PC-3 (cell line): ENCODE measurements at regions of chr5 and their contacts with region 1.

Region 1: GRCh38 chr5:138035605-138036537 is 3.0 kb upstream of the FAM13B start:
- DNase-seq: peak; percentile 80
- ATAC-seq: peak; percentile 59
- H3K4me3 ChIP-seq: no peak overlapping the region
- H3K27ac ChIP-seq: no peak overlapping the region
- H3K4me1 ChIP-seq: peaks cover 8% of the 10 kb centered on the region
- H3K27me3 ChIP-seq: no peaks in the 10 kb centered on the region
- CTCF ChIP-seq: peak; percentile 95

Region 2: GRCh38 chr5:138065102-138065501 is 29.2 kb after region 1 on chr5:
- CTCF ChIA-PET with region 1: interaction called, 13 read pairs
- POLR2A ChIA-PET with region 1: no interaction called
- intact Hi-C with region 1: loop called (anchors 1 kb)
- DNase-seq: peak; percentile 3
- ATAC-seq: no peak
- H3K4me3 ChIP-seq: no peak overlapping the region
- H3K27ac ChIP-seq: no peak overlapping the region
- H3K4me1 ChIP-seq: no peaks in the 10 kb centered on the region
- H3K27me3 ChIP-seq: no peaks in the 10 kb centered on the region
- CTCF ChIP-seq: peak; percentile 56

Region 3: GRCh38 chr5:138077065-138077696 is 41.3 kb after region 1 on chr5:
- CTCF ChIA-PET with region 1: interaction called, 3 read pairs
- POLR2A ChIA-PET with region 1: no interaction called
- intact Hi-C with region 1: loop called (anchors 2 kb)
- DNase-seq: peak; percentile 72
- ATAC-seq: peak; percentile 73
- H3K4me3 ChIP-seq: no peak overlapping the region
- H3K27ac ChIP-seq: no peak overlapping the region
- H3K4me1 ChIP-seq: no peaks in the 10 kb centered on the region
- H3K27me3 ChIP-seq: no peaks in the 10 kb centered on the region
- CTCF ChIP-seq: peak; percentile 82